Activated CD8-positive, alpha-beta T cell treated with anti-CD3 and anti-CD28 coated beads, Interleukin-2, amount 10 ng/mL, durations not matched to agents 7 days and 5 days (primary cell): ENCODE measurements at regions of chr14 and their contacts with region 1.

Region 1: GRCh38 chr14:35121887-35122695 is at the starts of genes PPP2R3C and PRORP:
- DNase-seq: peak; percentile 96
- ATAC-seq: peak; percentile 90
- H3K4me3 Mint-ChIP-seq: peak within 1 kb of the TSS; percentile 98
- H3K27ac Mint-ChIP-seq: peak within 1 kb of the TSS; percentile 99
- H3K4me1 Mint-ChIP-seq: peaks cover 55% of the 10 kb centered on the region
- H3K27me3 Mint-ChIP-seq: no peaks in the 10 kb centered on the region
- total RNA-seq, gene PPP2R3C: 33.3 to 38.6 TPM
- total RNA-seq, gene PRORP: 32.5 to 35.4 TPM

Region 2: DNA sequence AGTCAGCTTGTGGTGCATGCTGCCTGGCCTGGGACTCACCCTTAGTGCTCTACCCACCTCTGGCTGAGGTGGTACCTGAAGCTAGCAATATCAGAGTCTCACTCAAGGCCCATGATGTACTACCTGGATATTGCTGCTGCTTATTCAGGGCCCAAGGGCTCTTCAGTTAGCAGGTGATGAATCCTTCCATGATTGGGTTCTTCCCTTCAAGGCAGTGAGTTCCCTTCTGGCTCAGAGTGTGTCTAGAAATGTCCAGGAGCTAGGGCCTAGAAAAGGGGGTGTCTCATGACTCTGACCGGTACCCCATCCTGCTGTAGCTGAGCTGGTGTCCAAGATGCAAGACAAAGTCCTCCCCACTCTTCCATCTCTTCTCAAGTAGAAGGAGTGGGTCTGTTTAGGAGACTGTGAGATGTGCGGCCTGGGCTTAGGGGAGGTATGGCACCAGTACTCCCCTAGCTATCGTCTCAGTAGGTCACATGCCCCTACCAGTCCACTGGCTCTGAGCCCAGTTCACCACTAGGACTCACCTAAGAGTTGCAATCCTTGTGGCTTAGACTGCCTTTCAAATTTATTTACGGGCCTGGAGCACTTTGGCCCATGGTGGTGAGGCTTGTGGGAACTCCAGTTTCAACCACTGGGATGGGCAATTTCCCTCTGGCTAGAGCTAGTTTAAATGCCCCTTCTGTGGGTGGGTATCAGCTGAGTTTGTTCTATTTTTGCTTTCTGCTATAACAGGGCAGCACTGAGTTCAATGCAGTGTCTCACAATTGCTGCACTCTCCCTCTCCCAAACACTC is 12.4 kb after region 1 on chr14:
- CTCF ChIA-PET with region 1: interaction called, 15 read pairs
- POLR2A ChIA-PET with region 1: interaction called, 12 read pairs
- DNase-seq: no peak
- ATAC-seq: no peak
- H3K4me3 Mint-ChIP-seq: no peak overlapping the region
- H3K27ac Mint-ChIP-seq: peak overlapping the region; percentile 23
- H3K4me1 Mint-ChIP-seq: peaks cover 5% of the 10 kb centered on the region
- H3K27me3 Mint-ChIP-seq: no peaks in the 10 kb centered on the region